Activated CD4-positive, alpha-beta memory T cell treated with anti-CD3 and anti-CD28 coated beads for 36 hours (primary cell): ENCODE measurements at regions of chr20 and their contacts with region 1.

Region 1: DNA sequence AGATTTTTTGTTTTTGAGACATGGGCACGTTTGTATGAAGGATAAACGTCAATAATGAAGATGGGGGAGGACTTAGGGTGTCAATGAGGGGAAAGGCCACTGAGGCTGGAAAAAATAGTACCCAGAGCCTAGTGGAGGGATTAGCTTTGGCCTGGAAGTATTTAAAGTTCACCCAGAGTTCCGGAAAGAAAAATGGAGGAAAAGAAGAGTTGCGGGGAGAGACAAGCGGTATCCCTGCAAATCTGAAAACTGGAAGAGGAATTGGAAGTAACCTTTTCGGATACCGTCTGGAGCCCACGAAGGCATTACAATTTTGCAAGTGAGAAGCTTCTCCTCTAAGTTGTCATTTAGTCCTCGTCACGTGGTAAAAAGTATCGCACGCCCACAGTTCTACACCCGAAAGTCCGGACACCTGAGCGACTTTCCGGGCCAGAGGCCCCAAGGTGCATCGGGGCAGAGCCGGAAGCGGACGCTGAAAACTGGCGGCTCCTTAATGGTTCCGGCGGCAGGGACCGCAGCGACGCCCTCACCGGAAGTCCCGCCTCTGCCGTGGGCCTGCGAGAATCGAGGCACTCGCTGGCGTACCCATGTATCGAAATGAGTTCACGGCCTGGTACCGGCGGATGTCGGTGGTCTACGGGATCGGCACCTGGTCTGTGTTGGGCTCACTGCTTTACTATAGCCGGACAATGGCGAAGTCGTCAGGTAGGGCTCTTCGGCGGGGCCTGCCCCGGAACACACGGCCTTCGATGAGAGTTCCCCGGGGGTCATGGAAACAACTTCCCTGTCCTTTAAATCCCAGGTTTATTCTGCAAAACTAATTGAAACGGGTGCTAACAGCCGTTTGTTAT is at the start of gene SMIM26:
- DNase-seq: peak; percentile 96
- H3K4me3 Mint-ChIP-seq: peak within 1 kb of the TSS; percentile 90
- H3K27ac Mint-ChIP-seq: peak within 1 kb of the TSS; percentile 91
- H3K4me1 Mint-ChIP-seq: peaks cover 11% of the 10 kb centered on the region
- H3K27me3 Mint-ChIP-seq: no peaks in the 10 kb centered on the region
- total RNA-seq, gene SMIM26: 56.0 to 59.0 TPM

Region 2: GRCh38 chr20:18412221-18412901 is 154.8 kb before region 1 on chr20:
- CTCF ChIA-PET with region 1: interaction called, 3 read pairs
- POLR2A ChIA-PET with region 1: no interaction called
- intact Hi-C with region 1: loop called (anchors 2 kb)
- DNase-seq: no peak
- H3K4me3 Mint-ChIP-seq: no peak overlapping the region
- H3K27ac Mint-ChIP-seq: no peak overlapping the region
- H3K4me1 Mint-ChIP-seq: peaks cover 3% of the 10 kb centered on the region
- H3K27me3 Mint-ChIP-seq: no peaks in the 10 kb centered on the region

Region 3: GRCh38 chr20:18496740-18497592 is 70.2 kb before region 1 on chr20 and contains the start of gene RBBP9:
- CTCF ChIA-PET with region 1: no interaction called
- POLR2A ChIA-PET with region 1: interaction called, 3 read pairs
- intact Hi-C with region 1: loop called (anchors 1 kb)
- DNase-seq: peak; percentile 87
- H3K4me3 Mint-ChIP-seq: peak within 1 kb of the TSS; percentile 98
- H3K27ac Mint-ChIP-seq: peak within 1 kb of the TSS; percentile 84
- H3K4me1 Mint-ChIP-seq: peaks cover 9% of the 10 kb centered on the region
- H3K27me3 Mint-ChIP-seq: no peaks in the 10 kb centered on the region
- total RNA-seq, gene RBBP9: 15.9 to 17.7 TPM

Region 4: DNA sequence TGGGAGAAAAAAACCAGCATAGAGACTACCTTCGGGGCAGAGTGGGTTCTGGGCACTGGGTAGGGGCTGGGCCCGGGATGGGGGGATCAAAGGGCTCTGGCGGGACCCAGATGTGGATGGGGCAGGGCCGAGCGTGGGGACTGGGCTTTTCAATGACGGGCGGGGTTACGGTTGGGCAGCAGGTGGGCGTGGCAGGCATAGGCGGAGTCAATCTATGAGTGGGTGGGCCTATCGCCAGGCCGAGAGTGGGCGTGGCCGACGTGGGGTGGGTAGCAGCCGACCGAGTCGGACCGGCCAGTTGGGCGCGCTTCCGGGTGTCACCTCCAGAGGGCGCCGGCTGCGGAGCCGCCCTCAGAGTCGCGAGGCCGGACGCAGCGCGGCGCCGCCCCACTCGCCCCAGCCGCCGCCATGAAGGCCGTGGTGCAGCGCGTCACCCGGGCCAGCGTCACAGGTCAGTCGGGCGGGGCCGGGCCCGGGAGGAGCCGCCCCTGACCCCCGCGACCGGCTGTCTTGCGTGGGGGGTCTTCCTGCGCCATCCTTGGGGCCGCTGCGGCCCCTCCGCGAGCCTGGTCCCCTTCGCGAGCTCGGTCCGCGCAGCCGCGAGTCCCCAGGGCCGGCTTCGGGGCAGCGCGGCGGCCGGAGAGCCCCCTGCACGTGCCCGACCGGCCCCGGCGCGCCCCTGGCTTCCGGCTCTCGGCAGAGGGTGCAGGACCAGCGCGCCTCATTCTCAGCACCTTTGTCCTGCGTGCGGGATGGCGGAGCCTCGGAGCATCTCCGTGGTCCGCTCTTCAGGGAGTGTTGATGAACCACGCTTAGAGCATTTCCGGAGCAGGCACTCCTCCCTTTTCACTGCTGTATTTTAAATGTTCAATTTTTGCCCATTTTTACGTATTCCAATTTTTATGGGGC is 20.8 kb after region 1 on chr20 and contains the start of gene DTD1:
- CTCF ChIA-PET with region 1: no interaction called
- POLR2A ChIA-PET with region 1: no interaction called
- intact Hi-C with region 1: loop called (anchors 1 kb)
- DNase-seq: peak; percentile 94
- H3K4me3 Mint-ChIP-seq: peak within 1 kb of the TSS; percentile 86
- H3K27ac Mint-ChIP-seq: peak within 1 kb of the TSS; percentile 77
- H3K4me1 Mint-ChIP-seq: peaks cover 32% of the 10 kb centered on the region
- H3K27me3 Mint-ChIP-seq: peaks cover 5% of the 10 kb centered on the region
- total RNA-seq, gene DTD1: 49.2 to 55.4 TPM

Region 5: DNA sequence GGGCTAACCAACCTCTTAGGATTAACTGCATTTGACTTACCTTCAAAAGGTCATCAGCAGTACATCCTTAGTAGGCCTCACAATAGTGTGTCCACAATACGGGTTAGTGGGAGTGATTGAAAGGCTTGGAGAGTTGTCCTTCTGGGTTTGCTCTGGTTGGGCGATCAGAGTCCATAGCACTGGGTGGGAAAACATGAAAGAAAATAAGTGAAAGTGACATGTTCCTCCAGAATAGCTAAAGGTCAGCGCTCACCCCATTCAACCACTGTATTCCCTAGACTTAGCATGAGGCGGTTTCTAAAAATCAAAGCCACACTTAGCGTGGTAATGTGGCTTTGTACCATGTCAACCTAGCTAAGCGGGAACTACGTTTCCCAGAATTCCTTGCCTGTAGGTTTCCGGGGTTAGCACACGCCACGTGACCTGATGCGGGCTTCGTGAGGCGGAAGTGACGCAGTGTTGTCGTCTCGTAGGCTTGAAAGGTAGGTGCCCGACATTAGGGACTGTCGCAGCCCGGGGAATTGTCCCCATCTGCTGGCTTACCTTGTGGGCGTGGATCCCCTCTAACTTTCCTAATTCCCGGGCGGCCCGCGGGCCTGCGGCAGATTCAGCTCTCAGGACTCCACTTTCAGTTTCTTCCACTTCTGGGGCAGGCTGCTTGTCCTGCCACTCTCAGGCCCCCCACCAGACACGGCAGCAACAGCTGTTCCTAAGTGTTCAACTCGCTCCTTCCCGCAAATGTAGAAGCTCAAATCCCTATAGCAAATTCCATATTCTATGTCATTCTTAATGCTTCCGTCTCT is 226.7 kb after region 1 on chr20:
- CTCF ChIA-PET with region 1: no interaction called
- POLR2A ChIA-PET with region 1: no interaction called
- intact Hi-C with region 1: loop called (anchors 1 kb)
- DNase-seq: peak; percentile 91
- H3K4me3 Mint-ChIP-seq: peak overlapping the region; percentile 90
- H3K27ac Mint-ChIP-seq: peak overlapping the region; percentile 86
- H3K4me1 Mint-ChIP-seq: peaks cover 12% of the 10 kb centered on the region
- H3K27me3 Mint-ChIP-seq: peaks cover 7% of the 10 kb centered on the region